Prostate gland (tissue), 2 donors: ENCODE measurements at regions of chr12 and their contacts with region 1.

Region 1: GRCh38 chr12:14239350-14239934 is 126.0 kb upstream of the ATF7IP start:
- DNase-seq: no peak
- H3K4me3 ChIP-seq: no peak overlapping the region
- H3K27ac ChIP-seq: peak overlapping the region in 1 of 2 donors; percentile 1
- H3K4me1 ChIP-seq: no peaks in the 10 kb centered on the region
- H3K27me3 ChIP-seq: no peaks in the 10 kb centered on the region
- CTCF ChIP-seq: no peak
- POLR2A ChIP-seq: no peak

Region 2: DNA sequence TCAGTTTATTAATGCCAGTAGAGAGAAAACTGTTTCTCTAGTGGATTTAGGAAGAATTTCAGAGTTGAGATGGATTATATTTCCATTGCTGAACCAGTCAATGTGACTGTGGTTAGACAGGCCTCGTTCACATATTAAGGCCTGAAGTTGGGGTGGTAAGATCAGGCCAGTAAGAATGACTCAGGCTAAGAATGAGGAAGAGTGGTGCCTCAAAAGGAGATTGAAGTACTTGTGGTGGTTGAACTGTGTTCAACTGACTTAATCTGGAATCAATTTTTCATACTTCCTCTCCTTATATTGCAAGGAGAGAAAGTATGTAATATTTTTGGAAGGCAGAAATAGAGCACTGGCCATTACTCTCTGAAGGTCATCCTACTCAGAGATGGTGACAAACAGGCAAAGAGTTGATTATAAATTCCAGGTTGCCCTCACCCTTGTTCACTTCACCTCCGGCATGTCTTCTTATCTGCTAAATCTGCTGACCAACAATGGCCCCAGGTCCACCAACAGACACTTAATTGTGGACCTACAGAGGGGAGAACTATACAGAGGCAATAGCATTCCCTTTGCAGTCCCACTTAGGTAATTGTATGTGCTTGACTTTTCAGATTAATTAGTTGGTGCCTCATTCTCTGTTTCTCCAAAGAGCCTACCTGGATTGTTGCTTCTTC is 88.4 kb after region 1 on chr12:
- intact Hi-C with region 1: no loop called
- DNase-seq: no peak
- H3K4me3 ChIP-seq: no peak overlapping the region
- H3K27ac ChIP-seq: no peak overlapping the region
- H3K4me1 ChIP-seq: no peaks in the 10 kb centered on the region
- H3K27me3 ChIP-seq: no peaks in the 10 kb centered on the region
- CTCF ChIP-seq: no peak
- POLR2A ChIP-seq: no peak

Region 3: GRCh38 chr12:14618983-14619382 is 379.5 kb after region 1 on chr12:
- intact Hi-C with region 1: loop called (anchors 5 kb)
- DNase-seq: no peak
- H3K4me3 ChIP-seq: no peak overlapping the region
- H3K27ac ChIP-seq: no peak overlapping the region
- H3K4me1 ChIP-seq: no peaks in the 10 kb centered on the region
- H3K27me3 ChIP-seq: no peaks in the 10 kb centered on the region
- CTCF ChIP-seq: peak in 3 of 4 experiments; percentile 19 to 56 (median 44)
- POLR2A ChIP-seq: no peak

Region 4: DNA sequence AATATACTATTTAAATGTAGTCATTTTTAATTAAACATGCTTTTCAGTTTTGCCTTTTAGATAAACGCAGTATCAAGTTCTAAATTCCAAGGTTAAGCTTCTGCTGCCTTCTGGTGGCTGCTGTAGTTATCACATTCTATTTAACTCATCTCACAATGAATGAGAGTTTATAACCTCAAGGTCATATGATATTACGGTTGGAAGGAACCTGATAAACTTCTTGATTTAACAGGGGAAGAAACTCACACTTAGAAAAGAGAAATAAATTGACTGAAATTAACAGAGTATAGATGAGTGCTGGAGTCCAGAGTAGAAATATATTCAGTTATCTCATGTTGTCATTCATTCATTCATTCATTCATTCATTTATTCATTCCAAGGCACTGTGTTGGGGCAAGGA is 425.1 kb after region 1 on chr12:
- intact Hi-C with region 1: loop called (anchors 1 kb)
- DNase-seq: peak; percentile 33
- H3K4me3 ChIP-seq: no peak overlapping the region
- H3K27ac ChIP-seq: no peak overlapping the region
- H3K4me1 ChIP-seq: no peaks in the 10 kb centered on the region
- H3K27me3 ChIP-seq: no peaks in the 10 kb centered on the region
- CTCF ChIP-seq: peak; percentile 45 to 82 (median 64)
- POLR2A ChIP-seq: no peak